Heart left ventricle (tissue), 16 donors: ENCODE measurements at regions of chr1 and their contacts with region 1.

Region 1: DNA sequence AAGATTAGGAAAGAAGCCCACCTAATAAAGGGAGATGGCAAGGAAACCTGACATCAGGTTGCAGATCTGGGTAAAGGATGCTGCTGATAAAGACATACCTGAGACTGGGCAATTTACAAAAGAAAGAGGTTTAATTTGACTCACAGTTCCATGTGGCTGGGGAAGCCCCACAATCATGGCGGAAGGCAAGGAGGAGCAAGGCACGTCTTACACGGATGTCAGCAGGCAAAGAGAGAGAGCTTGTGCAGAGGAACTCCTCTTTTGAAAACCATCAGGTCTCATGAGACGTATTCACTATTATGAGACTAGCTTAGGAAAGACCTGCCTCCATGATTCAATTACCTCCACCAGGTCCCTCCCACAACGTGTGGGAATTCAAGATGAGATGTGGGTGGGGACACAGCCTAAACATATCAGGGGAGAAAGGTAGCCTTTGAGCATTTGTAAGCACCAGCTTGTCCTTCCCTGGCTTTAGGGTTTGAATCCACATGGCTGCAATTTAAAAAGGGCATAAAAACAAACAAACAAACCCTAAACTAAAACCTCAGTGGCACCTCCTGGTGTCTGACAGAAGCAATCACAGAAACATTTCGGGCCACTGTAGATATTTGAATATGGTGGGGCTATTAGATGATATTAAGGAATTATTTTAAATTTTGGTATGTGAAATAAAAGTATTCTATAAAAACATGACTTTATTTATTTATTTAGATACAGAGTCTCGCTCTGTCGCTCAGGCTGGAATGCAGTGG is 33.1 kb downstream of the SLC2A7 start:
- DNase-seq: no peak
- ATAC-seq: no peak
- H3K4me3 ChIP-seq: no peak overlapping the region
- H3K27ac ChIP-seq: no peak overlapping the region
- H3K4me1 ChIP-seq: peaks cover 0 to 5% (median 0%) of the 10 kb centered on the region in 12 donors
- H3K27me3 ChIP-seq: no peaks in the 10 kb centered on the region
- CTCF ChIP-seq: no peak
- POLR2A ChIP-seq: no peak

Region 2: DNA sequence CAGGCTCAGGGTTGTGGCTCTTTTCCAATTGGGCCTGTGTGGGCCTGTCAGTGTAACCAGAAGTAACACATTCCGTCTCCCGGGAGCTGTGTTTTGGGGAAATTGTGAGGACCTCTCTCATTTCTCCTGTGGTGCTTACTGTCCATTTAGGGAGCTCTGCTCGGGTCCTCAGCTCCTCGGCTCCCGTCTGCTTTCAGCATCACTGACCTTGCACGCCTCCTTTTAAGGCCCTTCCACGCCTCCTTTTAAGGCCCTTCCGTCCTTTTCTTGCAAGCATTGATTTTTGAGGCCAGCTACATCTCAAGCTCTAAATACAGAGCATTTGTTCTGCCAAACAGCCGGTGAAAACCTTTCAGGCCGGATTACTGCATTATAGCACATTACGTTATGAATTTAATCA is 37.7 kb before region 1 on chr1:
- intact Hi-C with region 1: loop called in 1 of 10 experiments (anchors 2 kb)
- DNase-seq: no peak
- ATAC-seq: no peak
- H3K4me3 ChIP-seq: no peak overlapping the region
- H3K27ac ChIP-seq: no peak overlapping the region
- H3K4me1 ChIP-seq: no peaks in the 10 kb centered on the region
- H3K27me3 ChIP-seq: no peaks in the 10 kb centered on the region
- CTCF ChIP-seq: no peak
- POLR2A ChIP-seq: no peak

Region 3: DNA sequence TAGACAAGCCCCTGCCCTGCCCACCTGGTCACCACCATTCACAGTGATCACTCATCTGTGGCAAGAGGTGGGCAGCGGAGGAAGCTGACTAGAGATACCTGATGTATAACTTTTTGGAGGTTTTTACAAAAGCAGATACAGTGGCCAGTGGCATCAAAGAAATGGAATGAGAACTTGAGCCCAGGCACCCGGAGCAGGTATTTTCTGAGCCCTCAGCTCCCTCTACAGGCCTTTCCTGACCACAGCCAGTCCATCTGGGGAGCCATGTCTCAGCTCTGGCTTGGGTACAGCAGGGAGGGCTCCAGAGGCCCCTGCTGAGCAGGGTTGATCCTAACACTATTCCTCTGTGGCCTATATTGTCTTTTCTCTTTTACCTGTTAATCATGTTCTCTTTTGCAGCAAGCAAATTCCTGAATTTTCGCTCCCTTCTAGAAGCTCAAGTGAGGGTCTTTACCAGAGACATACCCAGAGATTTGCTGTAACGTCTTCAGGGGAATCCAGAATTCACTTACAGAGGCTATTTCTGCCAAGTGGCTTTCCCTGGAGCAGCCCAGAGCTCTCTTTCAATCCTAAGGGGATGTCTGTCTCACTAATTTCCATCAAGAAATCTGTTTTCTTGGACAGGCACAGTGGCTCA is 108.5 kb after region 1 on chr1:
- intact Hi-C with region 1: no loop called
- DNase-seq: peak in 2 of 5 donors; percentile 35 to 41
- ATAC-seq: peak; percentile 48 to 73 (median 68)
- H3K4me3 ChIP-seq: no peak overlapping the region
- H3K27ac ChIP-seq: no peak overlapping the region
- H3K4me1 ChIP-seq: peaks cover 0 to 17% (median 0%) of the 10 kb centered on the region in 12 donors
- H3K27me3 ChIP-seq: no peaks in the 10 kb centered on the region
- CTCF ChIP-seq: peak; percentile 17 to 69 (median 58)
- POLR2A ChIP-seq: no peak

Region 4: DNA sequence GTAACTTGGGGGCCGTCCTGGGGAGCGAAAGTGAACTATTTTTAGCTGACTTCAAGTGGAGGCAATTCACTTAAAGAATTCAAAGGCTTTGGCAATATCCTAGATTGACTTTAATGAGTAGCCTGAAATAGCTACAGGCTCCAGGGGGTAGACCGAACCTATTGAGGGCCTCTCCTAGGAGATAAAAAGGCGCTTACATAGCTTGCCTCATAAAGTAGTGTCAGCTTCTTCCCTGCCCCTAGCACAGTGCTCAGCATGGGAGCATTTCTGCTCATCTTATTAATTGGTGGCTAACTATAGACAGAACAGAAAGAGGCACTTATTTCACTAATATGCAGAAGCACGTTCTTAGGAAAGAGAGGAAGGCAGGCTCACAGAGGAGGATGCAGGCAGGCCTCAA is 929.2 kb after region 1 on chr1:
- intact Hi-C with region 1: no loop called
- DNase-seq: peak in 1 of 5 donors; percentile 38
- ATAC-seq: peak; percentile 73 to 92 (median 78)
- H3K4me3 ChIP-seq: no peak overlapping the region
- H3K27ac ChIP-seq: peak overlapping the region in 8 of 12 donors; percentile 11 to 56 (median 27)
- H3K4me1 ChIP-seq: peaks cover 0 to 12% (median 0%) of the 10 kb centered on the region in 12 donors
- H3K27me3 ChIP-seq: no peaks in the 10 kb centered on the region
- CTCF ChIP-seq: no peak
- POLR2A ChIP-seq: no peak